H1 (cell line): ENCODE measurements at regions of chr1 and their contacts with region 1.

Region 1: GRCh38 chr1:150281837-150282653 is at the start of gene CIART:
- DNase-seq: peak; percentile 88 to 96
- H3K4me3 ChIP-seq: peak within 1 kb of the TSS; percentile 69 to 86 (median 81)
- H3K27ac ChIP-seq: peak within 1 kb of the TSS; percentile 88
- H3K4me1 ChIP-seq: peaks cover 0 to 4% (median 2%) of the 10 kb centered on the region in 4 experiments; a peak in 2 of 7 replicates
- H3K27me3 ChIP-seq: peaks cover 0 to 7% (median 7%) of the 10 kb centered on the region in 4 experiments; a peak in 4 of 7 replicates
- CTCF ChIP-seq: no peak
- EP300 ChIP-seq: 0 out of 3 replicates have a peak, but pooled peaks of 1 of the 2 experiments have one; percentile 6
- POLR2A ChIP-seq: peak; percentile 77 to 85
- RAD21 ChIP-seq: no peak
- total RNA-seq, gene CIART: 9.6 and 10.6 TPM in 2 replicates

Region 2: DNA sequence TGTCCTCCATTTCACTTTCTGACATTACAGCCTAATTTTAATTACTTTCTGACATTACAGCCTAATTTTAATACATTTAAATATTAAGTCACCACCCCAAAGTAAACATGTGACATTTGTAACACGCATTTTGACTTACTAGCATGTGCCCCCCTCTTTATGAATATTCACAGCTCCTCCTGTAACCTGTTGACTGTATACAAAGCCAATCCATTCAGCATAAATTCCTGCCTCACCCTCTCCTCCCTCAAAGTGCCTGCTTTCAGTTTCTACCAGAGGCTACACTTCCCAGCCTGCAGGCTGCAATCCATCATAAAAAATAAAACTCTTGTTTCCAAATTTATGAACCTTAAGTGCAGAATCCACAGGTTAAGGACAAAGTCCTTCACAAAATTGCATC is 85.6 kb before region 1 on chr1:
- CTCF ChIA-PET with region 1: no interaction called
- POLR2A ChIA-PET with region 1: no interaction called
- DNase-seq: no peak
- H3K4me3 ChIP-seq: no peak overlapping the region
- H3K27ac ChIP-seq: no peak overlapping the region
- H3K4me1 ChIP-seq: peaks cover 0 to 2% (median 0%) of the 10 kb centered on the region in 4 experiments; a peak in 2 of 7 replicates
- H3K27me3 ChIP-seq: no peaks in the 10 kb centered on the region
- CTCF ChIP-seq: no peak
- EP300 ChIP-seq: no peak
- POLR2A ChIP-seq: no peak
- RAD21 ChIP-seq: no peak

Region 3: DNA sequence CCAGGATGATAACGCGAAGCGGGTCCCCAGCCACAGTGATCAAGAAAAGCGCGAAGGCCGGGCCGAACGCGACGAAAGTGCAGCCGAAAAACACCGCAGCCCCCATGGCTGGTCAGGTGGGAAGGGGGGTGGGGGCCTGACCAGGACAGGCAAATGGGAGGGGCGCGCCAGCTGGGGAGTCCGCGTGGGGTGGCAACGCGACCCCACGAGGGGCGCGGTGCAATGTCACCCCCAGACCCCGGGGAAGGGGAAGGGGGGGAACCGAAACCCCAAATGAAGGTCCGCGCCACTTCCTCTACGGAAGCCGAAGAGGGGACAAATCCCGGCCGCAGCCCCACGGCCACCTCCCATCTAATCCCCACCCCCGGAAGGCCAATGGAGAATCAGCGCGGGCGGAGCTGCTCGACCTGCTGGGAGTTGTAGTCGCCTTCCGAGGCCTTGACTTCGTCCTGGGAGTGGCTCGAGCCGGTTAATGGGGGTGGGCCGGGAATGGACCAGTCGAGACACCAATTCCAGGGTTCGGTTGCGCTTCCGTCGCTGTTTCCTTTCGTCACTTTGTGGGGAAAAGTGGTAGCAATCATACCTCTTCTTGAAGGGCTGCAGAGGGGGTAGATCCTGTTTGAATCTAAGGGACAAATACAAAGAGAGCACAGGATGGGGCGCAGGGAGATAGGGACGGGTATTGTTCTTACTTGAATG is 13.2 kb before region 1 on chr1 and contains the start of gene APH1A:
- CTCF ChIA-PET with region 1: interaction called, 326 read pairs
- POLR2A ChIA-PET with region 1: interaction called, 535 read pairs
- DNase-seq: peak; percentile 92 to 95
- H3K4me3 ChIP-seq: peak within 1 kb of the TSS; percentile 81 to 99 (median 96)
- H3K27ac ChIP-seq: peak within 1 kb of the TSS; percentile 69
- H3K4me1 ChIP-seq: peaks cover 8 to 13% (median 10%) of the 10 kb centered on the region in 4 experiments; a peak in 6 of 7 replicates
- H3K27me3 ChIP-seq: no peaks in the 10 kb centered on the region
- CTCF ChIP-seq: no peak
- EP300 ChIP-seq: peak in 1 of 2 experiments; percentile 83; a peak in 1 of 3 replicates
- POLR2A ChIP-seq: no peak; a peak in 1 of 3 replicates
- RAD21 ChIP-seq: no peak
- total RNA-seq, gene APH1A: 110 and 111 TPM in 2 replicates

Region 4: GRCh38 chr1:150293433-150294168 is 11.6 kb after region 1 on chr1 and contains the start of gene MRPS21:
- CTCF ChIA-PET with region 1: no interaction called
- POLR2A ChIA-PET with region 1: interaction called, 17 read pairs
- DNase-seq: peak; percentile 70 to 88
- H3K4me3 ChIP-seq: peak within 1 kb of the TSS; percentile 79 to 100 (median 90)
- H3K27ac ChIP-seq: peak within 1 kb of the TSS; percentile 90
- H3K4me1 ChIP-seq: no peaks in the 10 kb centered on the region; a peak in 2 of 7 replicates
- H3K27me3 ChIP-seq: no peaks in the 10 kb centered on the region
- CTCF ChIP-seq: no peak
- EP300 ChIP-seq: no peak; a peak in 1 of 3 replicates
- POLR2A ChIP-seq: peak; percentile 92 to 99
- RAD21 ChIP-seq: no peak
- total RNA-seq, gene MRPS21: 99.8 and 104 TPM in 2 replicates

Region 5: GRCh38 chr1:150302338-150302737 is 20.3 kb after region 1 on chr1:
- CTCF ChIA-PET with region 1: interaction called, 4 read pairs
- POLR2A ChIA-PET with region 1: interaction called, 11 read pairs
- DNase-seq: no peak
- H3K4me3 ChIP-seq: peak overlapping the region in 1 of 4 experiments; percentile 40; a peak in 2 of 8 replicates
- H3K27ac ChIP-seq: peak overlapping the region; percentile 74
- H3K4me1 ChIP-seq: peaks cover 5 to 14% (median 6%) of the 10 kb centered on the region in 4 experiments; a peak in 5 of 7 replicates
- H3K27me3 ChIP-seq: no peaks in the 10 kb centered on the region
- CTCF ChIP-seq: no peak
- EP300 ChIP-seq: no peak
- POLR2A ChIP-seq: peak in 1 of 2 experiments; percentile 56; a peak in 1 of 3 replicates
- RAD21 ChIP-seq: no peak

Region 6: GRCh38 chr1:150363426-150364230 is 81.6 kb after region 1 on chr1 and contains the start of gene RPRD2:
- CTCF ChIA-PET with region 1: no interaction called
- POLR2A ChIA-PET with region 1: interaction called, 14 read pairs
- DNase-seq: peak; percentile 95 to 96
- H3K4me3 ChIP-seq: peak within 1 kb of the TSS; percentile 73 to 96 (median 92)
- H3K27ac ChIP-seq: peak within 1 kb of the TSS; percentile 98
- H3K4me1 ChIP-seq: peaks cover 2 to 5% (median 4%) of the 10 kb centered on the region in 4 experiments; a peak in 5 of 7 replicates
- H3K27me3 ChIP-seq: no peaks in the 10 kb centered on the region
- CTCF ChIP-seq: 0 out of 4 replicates have a peak, but pooled peaks of 1 of the 3 experiments have one; percentile 2
- EP300 ChIP-seq: no peak
- POLR2A ChIP-seq: peak; percentile 58 to 94
- RAD21 ChIP-seq: no peak
- total RNA-seq, gene RPRD2: 30.2 and 32.4 TPM in 2 replicates